Activated naive CD4-positive, alpha-beta T cell treated with anti-CD3 and anti-CD28 coated beads for 36 hours (primary cell): ENCODE measurements at regions of chr19 and their contacts with region 1.

Region 1: DNA sequence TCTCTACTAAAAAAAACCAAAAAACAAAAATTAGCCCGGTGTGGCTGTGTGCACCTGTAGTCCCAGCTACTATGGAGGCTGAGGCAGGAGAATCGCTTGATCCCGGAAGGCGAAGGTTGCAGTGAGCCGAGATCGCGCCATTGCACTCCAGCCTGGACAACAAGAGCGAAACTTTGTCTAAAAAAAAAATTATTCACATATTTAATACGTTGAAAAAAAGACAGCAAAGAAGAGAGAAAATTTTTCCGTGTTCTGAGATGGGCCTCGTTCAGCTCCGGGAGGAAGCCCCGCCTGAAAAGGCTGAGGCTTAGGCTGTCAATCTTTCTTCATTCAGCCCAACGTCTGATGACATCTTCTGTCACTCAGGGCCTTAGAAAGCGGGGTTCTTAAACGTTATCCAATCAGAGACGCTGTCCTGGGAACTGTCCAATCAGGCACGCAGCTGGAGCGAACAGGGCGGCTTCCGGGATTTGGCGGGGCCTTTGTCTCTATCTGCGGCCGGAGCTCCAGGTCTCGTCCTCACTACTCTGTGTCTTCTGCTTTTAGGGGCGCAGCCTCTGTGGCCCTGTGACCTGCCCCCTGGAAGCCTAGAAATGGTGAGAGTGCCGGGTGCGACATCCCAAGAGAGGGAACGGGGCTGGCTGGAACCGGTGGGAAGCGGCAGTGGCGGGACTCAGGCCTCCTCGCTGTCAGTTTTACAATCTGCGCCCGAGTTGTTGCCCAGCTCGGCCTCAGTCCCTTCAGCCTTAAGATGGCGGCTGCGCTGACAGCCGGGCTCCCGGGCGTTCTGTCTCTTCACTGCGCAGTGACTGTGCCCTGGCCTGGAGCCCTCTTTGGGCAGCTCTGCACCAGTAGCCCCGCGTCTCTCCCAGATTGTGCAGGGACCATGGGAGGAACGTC is at the start of gene ZNF726:
- DNase-seq: peak; percentile 93
- H3K4me3 Mint-ChIP-seq: peak within 1 kb of the TSS; percentile 96
- H3K27ac Mint-ChIP-seq: peak within 1 kb of the TSS; percentile 91
- H3K4me1 Mint-ChIP-seq: peaks cover 11% of the 10 kb centered on the region
- H3K27me3 Mint-ChIP-seq: peaks cover under 1% of the 10 kb centered on the region
- total RNA-seq, gene ZNF726: 22.3 to 22.8 TPM

Region 2: DNA sequence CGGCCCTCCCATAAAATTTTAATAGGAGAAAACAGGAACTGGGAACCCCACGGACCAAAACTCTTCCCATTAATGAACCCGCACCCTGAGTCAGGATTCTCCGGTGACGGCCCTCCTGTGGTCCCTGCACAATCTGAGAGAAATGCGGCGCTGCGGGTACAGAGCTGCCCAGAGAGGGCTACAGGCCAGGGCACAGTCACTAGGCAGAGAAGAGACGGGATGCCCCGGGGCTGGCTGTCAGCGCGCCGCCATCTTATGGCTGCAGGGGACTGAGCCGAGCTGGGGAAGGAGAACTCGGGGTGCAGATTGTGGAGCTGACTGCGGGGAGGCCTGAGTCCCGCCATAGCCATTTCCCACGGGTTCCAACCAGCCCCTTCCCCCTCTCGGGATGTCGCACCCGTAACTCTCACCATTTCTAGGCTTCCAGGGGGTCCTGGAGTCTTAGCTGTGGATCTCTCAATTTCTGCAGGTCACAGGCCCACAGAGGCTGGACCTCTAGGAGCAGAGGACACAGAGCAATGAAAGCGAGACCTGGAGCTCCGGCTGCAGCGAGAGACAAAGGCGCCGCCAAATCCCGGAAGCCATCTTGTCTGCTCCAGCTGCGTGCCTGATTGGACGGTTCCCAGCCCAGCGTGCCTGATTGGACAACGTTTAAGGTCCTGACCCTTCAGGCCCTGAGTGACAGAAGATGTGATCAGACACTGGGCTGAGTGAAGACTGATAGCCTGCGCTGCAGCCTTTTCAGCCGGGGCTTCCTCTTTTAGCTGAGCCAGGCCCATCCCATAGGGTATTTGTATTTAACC is 227.8 kb before region 1 on chr19 and contains the start of gene ZNF675:
- CTCF ChIA-PET with region 1: interaction called, 3 read pairs
- intact Hi-C with region 1: loop called (anchors 1 kb)
- DNase-seq: peak; percentile 94
- H3K4me3 Mint-ChIP-seq: peak within 1 kb of the TSS; percentile 96
- H3K27ac Mint-ChIP-seq: peak within 1 kb of the TSS; percentile 97
- H3K4me1 Mint-ChIP-seq: peaks cover 44% of the 10 kb centered on the region
- H3K27me3 Mint-ChIP-seq: no peaks in the 10 kb centered on the region
- total RNA-seq, gene ZNF675: 23.8 to 25.2 TPM

Region 3: DNA sequence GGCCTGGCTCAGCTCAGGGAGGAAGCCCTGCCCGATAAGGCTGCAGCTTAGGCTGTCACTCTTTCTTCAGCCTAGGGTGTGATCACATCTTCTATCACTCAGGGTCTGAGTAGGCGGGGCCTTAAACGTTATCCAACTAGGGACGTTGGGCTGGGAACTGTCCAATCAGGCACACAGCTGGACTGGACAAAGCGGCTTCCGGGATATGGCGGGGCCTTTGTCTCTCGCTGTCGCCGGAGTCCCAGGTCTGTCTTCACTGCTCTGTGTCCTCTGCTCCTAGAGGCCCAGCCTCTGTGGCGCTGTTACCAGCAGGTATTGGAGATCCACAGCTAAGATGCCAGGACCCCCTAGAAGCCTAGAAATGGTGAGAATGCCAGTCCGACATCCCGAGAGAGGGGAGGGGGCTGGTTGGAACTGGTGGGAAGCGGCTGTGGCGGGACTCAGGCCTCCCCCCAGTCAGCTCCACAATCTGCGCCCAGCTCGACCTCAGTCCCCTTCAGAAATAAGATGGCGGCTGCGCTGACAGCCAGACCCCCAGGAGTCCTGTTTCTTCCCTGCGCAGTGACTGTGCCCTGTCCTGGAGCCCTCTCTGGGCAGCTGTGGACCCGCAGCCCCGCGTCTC is 172.4 kb after region 1 on chr19 and contains the start of gene ZNF254:
- CTCF ChIA-PET with region 1: no interaction called
- intact Hi-C with region 1: loop called (anchors 1 kb)
- DNase-seq: peak; percentile 92
- H3K4me3 Mint-ChIP-seq: peak within 1 kb of the TSS; percentile 88
- H3K27ac Mint-ChIP-seq: peak within 1 kb of the TSS; percentile 83
- H3K4me1 Mint-ChIP-seq: peaks cover 2% of the 10 kb centered on the region
- H3K27me3 Mint-ChIP-seq: no peaks in the 10 kb centered on the region
- total RNA-seq, gene ZNF254: 6.6 to 7.5 TPM